Posterior vena cava (tissue), 2 donors: ENCODE measurements at regions of chr16 and their contacts with region 1.

Region 1: DNA sequence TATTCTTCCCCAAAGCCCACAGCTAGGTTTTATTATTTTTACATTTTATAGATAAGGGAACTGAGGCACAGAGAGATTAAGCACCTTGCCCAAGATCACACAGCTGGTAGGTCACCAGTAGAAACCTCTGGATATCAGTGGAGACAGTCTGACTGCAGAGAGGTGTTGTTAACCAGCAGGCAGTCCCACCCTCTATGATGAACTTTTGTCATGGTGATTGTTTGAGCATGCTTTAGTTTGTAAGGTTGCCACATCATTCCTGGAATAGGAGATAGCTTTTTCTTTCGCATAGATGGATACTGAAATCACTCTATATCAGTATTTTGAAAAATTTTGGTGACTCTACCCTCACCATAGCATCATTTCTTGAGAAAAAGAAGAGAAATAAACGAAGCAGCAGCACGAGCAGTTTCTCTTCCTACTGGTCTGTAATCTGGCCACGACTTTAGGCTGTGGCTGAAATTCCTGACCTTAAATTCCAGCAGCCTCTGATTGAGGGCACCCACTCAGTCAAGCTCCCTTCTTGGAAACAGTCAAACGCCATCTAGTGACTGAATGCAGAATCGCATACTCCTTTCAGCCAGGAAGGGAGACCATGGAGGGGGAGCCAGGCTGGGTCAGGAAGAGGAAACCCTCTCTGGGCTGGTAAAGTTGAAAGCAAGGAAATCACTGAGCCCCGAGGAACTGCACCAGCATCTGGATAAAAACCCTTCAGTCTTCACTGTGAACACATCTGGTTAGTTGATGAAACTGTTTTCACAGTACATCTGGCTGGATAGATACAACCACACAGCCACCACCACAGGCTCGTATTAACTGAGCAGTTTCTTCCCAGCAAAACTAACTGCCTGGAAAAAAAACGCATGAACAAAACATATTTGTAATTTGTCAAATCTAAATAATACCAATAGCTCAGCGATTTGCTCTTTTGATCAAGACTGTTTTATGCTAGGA is 108.4 kb upstream of the XYLT1 start:
- DNase-seq: no peak

Region 2: DNA sequence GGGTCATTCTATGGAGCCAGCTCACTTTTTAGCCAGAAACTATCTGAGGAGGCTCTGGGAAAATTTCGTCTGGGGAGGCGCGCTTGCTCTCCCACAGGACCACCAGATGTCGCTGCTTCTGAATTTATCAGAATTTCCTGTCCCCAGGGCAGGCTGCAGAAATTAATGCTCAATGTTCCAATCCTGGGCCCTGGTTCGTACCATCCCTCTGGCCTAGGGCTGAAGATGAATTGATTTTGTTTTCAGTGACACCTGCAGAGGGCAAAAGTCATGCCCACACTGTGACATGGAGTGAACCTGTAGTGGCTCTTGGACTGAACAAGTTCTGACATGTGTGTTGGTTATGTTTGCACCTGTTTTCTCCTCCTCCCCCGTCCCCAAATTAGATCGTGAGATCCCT is 717.7 kb before region 1 on chr16:
- intact Hi-C with region 1: loop called in 1 of 2 experiments (anchors 5 kb)
- DNase-seq: no peak

Region 3: GRCh38 chr16:17476414-17477270 is 102.6 kb before region 1 on chr16:
- intact Hi-C with region 1: loop called in 1 of 2 experiments (anchors 10 kb)
- DNase-seq: peak; percentile 48

Region 4: DNA sequence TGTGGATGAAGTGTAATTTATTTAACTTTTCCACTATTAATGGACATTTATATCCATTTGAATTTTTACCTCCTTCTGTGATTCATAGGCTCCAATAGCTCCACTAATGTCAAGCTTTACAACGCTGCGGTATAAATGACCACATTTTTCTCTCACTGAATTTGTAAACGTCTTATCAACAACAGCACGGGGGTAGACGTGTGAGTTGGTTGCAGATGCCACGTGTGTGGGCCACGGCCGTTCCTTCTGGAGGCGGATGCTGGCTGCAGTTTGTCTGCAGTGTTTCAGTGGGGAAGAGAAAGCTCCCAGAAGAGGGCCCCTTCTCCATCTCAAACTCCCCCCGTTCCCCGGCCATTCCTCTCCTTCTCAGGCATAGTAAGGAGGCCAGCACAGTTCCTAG is 40.3 kb before region 1 on chr16:
- intact Hi-C with region 1: loop called in 1 of 2 experiments (anchors 2 kb)
- DNase-seq: no peak

Region 5: GRCh38 chr16:17705847-17706246 is 126.6 kb after region 1 on chr16:
- intact Hi-C with region 1: no loop called
- DNase-seq: no peak